H1 (cell line): ENCODE measurements at regions of chr20 and their contacts with region 1.

Region 1: GRCh38 chr20:3616250-3616649 is 46.9 kb downstream of the GFRA4 start:
- DNase-seq: no peak
- H3K4me3 ChIP-seq: no peak overlapping the region
- H3K27ac ChIP-seq: no peak overlapping the region
- H3K4me1 ChIP-seq: no peaks in the 10 kb centered on the region
- H3K27me3 ChIP-seq: no peaks in the 10 kb centered on the region
- CTCF ChIP-seq: no peak
- EP300 ChIP-seq: no peak
- POLR2A ChIP-seq: no peak
- RAD21 ChIP-seq: no peak

Region 2: DNA sequence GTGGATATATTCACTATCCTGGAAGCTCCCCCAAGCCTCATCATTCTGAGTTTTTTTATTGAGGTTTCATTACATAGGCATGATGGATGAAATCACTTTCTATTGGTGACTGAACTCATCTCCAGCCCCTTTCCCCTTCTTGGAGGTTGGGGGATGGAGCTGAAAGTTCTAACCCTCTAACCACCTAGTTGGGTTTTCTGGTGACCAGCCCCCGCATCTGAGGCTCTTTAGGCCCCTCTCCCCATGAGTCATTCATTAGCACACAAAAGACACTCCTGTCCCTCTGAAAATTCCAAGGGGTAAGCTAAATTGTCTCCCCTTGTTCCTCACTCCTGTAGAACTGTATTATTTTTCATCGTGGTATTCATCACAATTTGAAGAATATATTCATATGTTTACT is 13.6 kb after region 1 on chr20:
- CTCF ChIA-PET with region 1: interaction called, 10 read pairs
- POLR2A ChIA-PET with region 1: interaction called, 3 read pairs
- DNase-seq: no peak
- H3K4me3 ChIP-seq: no peak overlapping the region
- H3K27ac ChIP-seq: no peak overlapping the region
- H3K4me1 ChIP-seq: peaks cover 0 to 6% (median 0%) of the 10 kb centered on the region in 4 experiments; a peak in 2 of 7 replicates
- H3K27me3 ChIP-seq: no peaks in the 10 kb centered on the region
- CTCF ChIP-seq: no peak
- EP300 ChIP-seq: no peak
- POLR2A ChIP-seq: no peak
- RAD21 ChIP-seq: no peak